Gastrocnemius medialis (tissue), 4 donors: ENCODE measurements at regions of chr2 and their contacts with region 1.

Region 1: DNA sequence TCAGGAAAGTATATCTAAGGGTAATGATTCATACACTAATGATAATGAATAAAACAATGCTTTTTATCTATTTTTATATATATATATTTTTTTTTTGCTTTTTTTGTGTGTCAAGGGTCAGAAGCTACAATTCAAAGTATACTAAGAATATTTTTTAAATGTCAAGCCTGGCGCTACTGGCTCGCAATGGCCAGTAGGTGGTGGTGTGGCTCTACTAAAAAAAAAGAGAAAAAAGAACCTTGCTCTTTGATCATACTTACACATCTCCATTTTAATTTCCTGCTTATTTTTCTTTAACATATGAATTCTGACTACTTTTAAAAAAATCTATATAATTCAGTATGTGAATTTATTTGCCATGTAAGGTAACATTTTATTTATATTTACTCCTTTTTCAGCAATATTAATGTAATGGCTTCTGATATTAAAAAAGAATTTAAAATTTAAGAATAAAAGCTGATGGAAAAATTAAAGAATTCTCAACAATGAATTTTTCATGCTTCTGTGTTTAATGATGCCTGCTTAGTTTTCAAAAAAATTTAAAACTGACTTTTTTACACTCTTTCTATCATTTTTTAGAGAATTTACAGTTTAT is 232.9 kb downstream of the GULP1 start:
- DNase-seq: no peak
- ATAC-seq: no peak
- H3K4me3 ChIP-seq: no peak overlapping the region
- H3K27ac ChIP-seq: peak overlapping the region in 1 of 4 donors; percentile 11
- H3K4me1 ChIP-seq: peaks cover 0 to 2% of the 10 kb centered on the region in 2 donors
- H3K27me3 ChIP-seq: no peaks in the 10 kb centered on the region
- CTCF ChIP-seq: peak in 4 of 5 experiments; percentile 23 to 68 (median 50)
- POLR2A ChIP-seq: no peak

Region 2: GRCh38 chr2:187499941-187500532 is 1024.6 kb before region 1 on chr2:
- in situ Hi-C with region 1: loop called in 1 of 4 experiments (anchors 25 kb)
- intact Hi-C with region 1: no loop called
- DNase-seq: peak in 1 of 2 donors; percentile 52
- ATAC-seq: peak; percentile 58 to 81
- H3K4me3 ChIP-seq: no peak overlapping the region
- H3K27ac ChIP-seq: no peak overlapping the region
- H3K4me1 ChIP-seq: peaks cover 0 to 6% of the 10 kb centered on the region in 2 donors
- H3K27me3 ChIP-seq: no peaks in the 10 kb centered on the region
- CTCF ChIP-seq: peak; percentile 71 to 91 (median 81)
- POLR2A ChIP-seq: no peak

Region 3: DNA sequence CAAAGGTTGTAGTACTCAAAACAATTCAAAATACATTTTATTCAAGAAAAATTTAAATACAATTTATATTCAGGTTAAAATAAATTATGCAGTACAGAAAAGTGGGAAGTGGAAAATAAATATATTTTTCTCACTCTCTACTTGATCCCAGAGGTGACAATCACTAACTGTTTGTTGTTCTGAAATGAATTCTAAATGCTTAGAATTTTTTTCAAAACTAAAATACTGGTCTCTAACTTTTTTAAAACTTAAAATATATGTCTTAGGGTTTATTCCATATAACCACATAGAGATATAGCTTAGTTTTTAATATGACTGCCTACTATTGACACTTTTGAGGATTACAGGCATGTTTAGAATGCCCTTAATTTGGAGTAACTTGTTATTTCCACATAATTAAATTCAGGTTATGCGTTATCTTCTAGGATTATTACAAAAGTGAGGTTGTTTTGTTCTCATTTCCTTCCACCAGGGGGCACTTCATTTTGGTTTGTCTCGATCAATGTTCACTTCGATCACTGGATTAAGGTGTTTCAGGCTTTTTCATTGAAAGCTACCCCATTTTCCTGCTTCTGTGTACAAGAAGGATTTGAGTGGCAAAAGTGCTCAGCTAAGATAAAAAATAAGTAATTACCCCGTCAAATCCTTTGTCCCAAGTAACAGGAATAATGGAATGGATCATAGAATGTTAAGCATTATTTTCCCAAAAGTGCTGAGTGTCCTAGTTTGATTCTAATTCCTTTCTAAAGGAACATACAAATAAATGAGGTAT is 943.3 kb before region 1 on chr2:
- in situ Hi-C with region 1: loop called (anchors 25 kb)
- intact Hi-C with region 1: no loop called
- DNase-seq: no peak
- ATAC-seq: peak in 1 of 2 donors; percentile 50
- H3K4me3 ChIP-seq: peak overlapping the region; percentile 24 to 44 (median 32)
- H3K27ac ChIP-seq: no peak overlapping the region
- H3K4me1 ChIP-seq: peaks cover 3 to 4% of the 10 kb centered on the region in 2 donors
- H3K27me3 ChIP-seq: no peaks in the 10 kb centered on the region
- CTCF ChIP-seq: peak; percentile 56 to 66 (median 60)
- POLR2A ChIP-seq: no peak

Region 4: GRCh38 chr2:188751816-188752215 is 227.2 kb after region 1 on chr2:
- in situ Hi-C with region 1: no loop called
- intact Hi-C with region 1: no loop called
- DNase-seq: no peak
- ATAC-seq: no peak
- H3K4me3 ChIP-seq: no peak overlapping the region
- H3K27ac ChIP-seq: no peak overlapping the region
- H3K4me1 ChIP-seq: no peaks in the 10 kb centered on the region
- H3K27me3 ChIP-seq: no peaks in the 10 kb centered on the region
- CTCF ChIP-seq: no peak
- POLR2A ChIP-seq: no peak

Region 5: GRCh38 chr2:188978291-188979081 is 453.9 kb after region 1 on chr2:
- in situ Hi-C with region 1: loop called in 3 of 4 experiments (anchors 10 kb)
- intact Hi-C with region 1: no loop called
- DNase-seq: peak; percentile 19
- ATAC-seq: peak; percentile 51 to 58
- H3K4me3 ChIP-seq: peak overlapping the region; percentile 14 to 48 (median 16)
- H3K27ac ChIP-seq: peak overlapping the region; percentile 62 to 78 (median 70)
- H3K4me1 ChIP-seq: peaks cover 0 to 6% of the 10 kb centered on the region in 2 donors
- H3K27me3 ChIP-seq: no peaks in the 10 kb centered on the region
- CTCF ChIP-seq: peak in 1 of 5 experiments; percentile 8
- POLR2A ChIP-seq: no peak

Region 6: DNA sequence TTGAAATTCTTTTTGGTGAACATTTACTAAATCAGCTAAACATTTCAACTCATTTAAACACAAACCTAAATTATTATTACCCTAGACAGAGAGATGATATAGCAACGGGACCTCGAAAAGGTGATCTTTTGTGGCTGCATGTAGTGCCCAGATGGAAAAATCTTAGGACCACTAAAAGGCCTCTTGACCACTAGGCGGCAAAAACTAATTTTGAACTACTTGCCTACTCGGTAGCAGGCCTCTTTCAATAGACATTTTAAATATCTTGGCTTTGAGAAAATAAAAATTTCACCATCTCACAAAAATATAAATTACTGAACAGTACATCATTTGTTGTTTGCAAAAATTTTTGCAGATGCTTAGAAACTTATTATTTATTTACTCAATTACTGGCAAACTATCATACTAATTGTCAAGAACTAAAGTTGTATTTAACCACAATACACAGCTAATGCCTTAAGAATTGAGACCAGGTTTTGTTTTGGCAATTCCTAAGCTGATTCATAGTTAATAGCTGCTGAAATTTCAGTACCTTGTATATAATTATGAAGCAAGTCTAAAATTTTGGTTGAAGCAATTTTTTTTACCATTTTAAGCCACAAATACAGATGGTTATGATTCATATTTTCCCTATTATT is 458.9 kb after region 1 on chr2:
- in situ Hi-C with region 1: loop called (anchors 5 to 10 kb)
- intact Hi-C with region 1: loop called (anchors 2 kb)
- DNase-seq: no peak
- ATAC-seq: peak; percentile 31 to 32
- H3K4me3 ChIP-seq: no peak overlapping the region
- H3K27ac ChIP-seq: peak overlapping the region; percentile 57 to 76 (median 62)
- H3K4me1 ChIP-seq: peaks cover 0 to 5% of the 10 kb centered on the region in 2 donors
- H3K27me3 ChIP-seq: no peaks in the 10 kb centered on the region
- CTCF ChIP-seq: peak in 2 of 5 experiments; percentile 15 to 26
- POLR2A ChIP-seq: no peak

Region 7: GRCh38 chr2:189096769-189097447 is 572.3 kb after region 1 on chr2:
- in situ Hi-C with region 1: no loop called
- intact Hi-C with region 1: loop called (anchors 10 kb)
- DNase-seq: no peak
- ATAC-seq: no peak
- H3K4me3 ChIP-seq: no peak overlapping the region
- H3K27ac ChIP-seq: no peak overlapping the region
- H3K4me1 ChIP-seq: peaks cover 0 to 8% of the 10 kb centered on the region in 2 donors
- H3K27me3 ChIP-seq: no peaks in the 10 kb centered on the region
- CTCF ChIP-seq: no peak
- POLR2A ChIP-seq: no peak

Region 8: DNA sequence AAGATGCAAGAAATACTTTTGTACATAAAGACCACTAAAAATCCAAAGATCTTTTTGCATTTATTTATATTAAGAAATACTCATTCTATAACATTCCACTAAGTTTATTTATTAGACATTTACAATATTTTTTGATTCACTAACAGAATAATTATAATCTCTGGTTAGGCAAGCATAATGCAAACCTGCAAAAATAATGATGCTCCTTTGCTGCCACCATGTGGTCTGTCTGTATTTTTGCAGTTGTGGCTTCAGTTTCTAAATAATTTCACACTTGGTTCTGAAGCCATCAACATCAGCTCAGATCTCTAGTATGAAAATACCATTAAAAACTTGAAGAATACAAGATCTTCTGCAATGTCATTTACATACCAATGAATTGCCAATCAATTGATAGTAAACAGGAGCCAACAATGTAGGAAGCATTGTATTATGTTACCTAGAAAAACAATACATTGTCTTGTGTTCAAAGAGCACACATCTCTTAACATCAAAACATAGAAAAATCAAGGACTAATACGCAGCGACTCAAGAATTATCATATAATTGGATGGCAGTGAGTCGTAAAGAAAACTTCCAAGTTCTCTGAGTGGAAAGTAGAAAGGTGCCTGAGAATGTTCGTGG is 887.8 kb after region 1 on chr2:
- in situ Hi-C with region 1: loop called (anchors 10 to 25 kb)
- intact Hi-C with region 1: loop called (anchors 5 kb)
- DNase-seq: no peak
- ATAC-seq: peak; percentile 60 to 82
- H3K4me3 ChIP-seq: no peak overlapping the region
- H3K27ac ChIP-seq: peak overlapping the region in 3 of 4 donors; percentile 42 to 51 (median 45)
- H3K4me1 ChIP-seq: peaks cover 7 to 12% of the 10 kb centered on the region in 2 donors
- H3K27me3 ChIP-seq: no peaks in the 10 kb centered on the region
- CTCF ChIP-seq: peak; percentile 46 to 87 (median 70)
- POLR2A ChIP-seq: no peak